Activated CD4-positive, alpha-beta T cell treated with anti-CD3 and anti-CD28 coated beads for 36 hours (primary cell): ENCODE measurements at regions of chr12 and their contacts with region 1.

Region 1: DNA sequence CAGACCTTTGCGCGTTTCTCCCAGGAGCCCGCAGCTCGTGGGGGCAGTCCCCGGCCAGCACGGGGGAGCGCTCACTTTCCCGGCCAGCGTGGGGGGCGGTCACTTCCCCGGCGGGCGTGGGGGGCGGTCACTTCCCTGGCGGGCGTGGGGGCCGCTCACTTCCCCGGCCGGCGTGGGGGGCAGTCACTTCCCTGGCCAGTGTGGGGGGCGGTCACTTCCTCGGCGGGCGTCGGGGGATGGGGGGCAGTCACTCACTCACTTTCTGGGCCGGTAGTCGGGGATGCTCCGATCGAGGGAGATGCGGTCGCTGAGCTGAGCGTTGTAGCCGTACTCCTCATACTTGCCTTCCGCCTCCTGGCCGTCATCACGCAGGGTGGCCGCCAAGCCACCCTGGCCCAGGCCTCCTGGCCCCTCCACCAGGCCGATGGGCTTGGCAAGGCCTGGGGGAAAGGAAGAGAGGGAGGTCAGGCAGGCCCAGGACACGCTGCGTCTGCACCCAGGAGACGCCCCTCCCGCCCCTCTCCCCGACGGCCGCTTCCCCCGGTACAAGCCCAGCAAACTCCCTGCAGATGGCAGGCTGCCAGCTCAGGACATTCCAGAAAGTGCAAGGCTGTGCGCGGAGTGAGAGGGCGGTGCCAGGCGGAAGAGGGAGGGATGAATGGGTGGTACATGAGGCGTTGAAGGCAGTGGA is 43.3 kb downstream of the GALNT9 start:
- DNase-seq: no peak
- ATAC-seq: no peak
- H3K4me3 Mint-ChIP-seq: no peak overlapping the region
- H3K27ac Mint-ChIP-seq: no peak overlapping the region
- H3K4me1 Mint-ChIP-seq: no peaks in the 10 kb centered on the region
- H3K27me3 Mint-ChIP-seq: peaks cover 28% of the 10 kb centered on the region

Region 2: GRCh38 chr12:132373901-132374611 is 87.9 kb after region 1 on chr12:
- CTCF ChIA-PET with region 1: no interaction called
- POLR2A ChIA-PET with region 1: no interaction called
- intact Hi-C with region 1: loop called in 1 of 2 experiments (anchors 10 kb)
- DNase-seq: no peak
- ATAC-seq: no peak
- H3K4me3 Mint-ChIP-seq: no peak overlapping the region
- H3K27ac Mint-ChIP-seq: no peak overlapping the region
- H3K4me1 Mint-ChIP-seq: no peaks in the 10 kb centered on the region
- H3K27me3 Mint-ChIP-seq: peaks cover 52% of the 10 kb centered on the region

Region 3: DNA sequence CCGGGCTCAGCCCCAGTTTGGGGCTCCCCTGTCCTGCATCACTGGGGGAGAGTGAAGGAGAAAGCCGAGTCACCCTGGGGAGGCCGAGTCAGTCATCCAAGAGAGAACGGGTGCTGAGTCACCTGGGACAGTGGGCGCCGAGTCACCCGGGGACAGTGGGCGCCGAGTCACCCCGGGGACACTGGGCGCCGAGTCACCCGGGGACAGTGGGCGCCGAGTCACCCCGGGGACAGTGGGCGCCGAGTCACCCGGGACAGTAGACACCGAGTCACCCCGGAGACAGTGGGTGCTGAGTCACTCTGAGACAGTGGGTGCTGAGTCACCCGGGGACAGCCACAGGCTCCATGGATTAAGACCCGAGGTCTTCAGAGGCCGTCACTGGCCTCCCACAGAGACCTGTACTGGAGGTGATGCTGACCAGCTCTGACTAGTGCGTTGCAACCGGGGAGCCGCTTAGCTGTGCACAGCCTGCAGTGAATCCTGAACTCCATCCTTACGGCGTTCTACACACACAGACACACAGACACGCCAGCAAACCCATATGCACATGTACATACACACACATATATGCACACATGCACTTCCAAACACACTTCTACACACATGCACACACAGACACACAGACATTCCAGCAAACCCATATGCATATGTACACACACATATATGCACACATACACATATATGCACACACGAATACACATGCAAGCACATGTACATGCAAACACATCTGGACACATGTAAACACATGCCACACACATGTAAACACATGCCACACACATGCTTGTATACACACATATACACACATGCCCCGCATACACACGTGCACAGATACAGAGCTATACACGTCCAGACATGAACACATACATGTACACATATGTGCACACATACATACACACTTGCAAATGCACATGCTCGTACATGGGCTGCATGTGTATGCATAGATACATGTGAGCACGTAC is 108.1 kb after region 1 on chr12:
- CTCF ChIA-PET with region 1: no interaction called
- POLR2A ChIA-PET with region 1: no interaction called
- intact Hi-C with region 1: loop called in 1 of 2 experiments (anchors 10 kb)
- DNase-seq: peak; percentile 53
- ATAC-seq: peak; percentile 78
- H3K4me3 Mint-ChIP-seq: no peak overlapping the region
- H3K27ac Mint-ChIP-seq: no peak overlapping the region
- H3K4me1 Mint-ChIP-seq: no peaks in the 10 kb centered on the region
- H3K27me3 Mint-ChIP-seq: peaks cover 16% of the 10 kb centered on the region